ENCODE measurements at regions of chr9 and their contacts with region 1.

Region 1: DNA sequence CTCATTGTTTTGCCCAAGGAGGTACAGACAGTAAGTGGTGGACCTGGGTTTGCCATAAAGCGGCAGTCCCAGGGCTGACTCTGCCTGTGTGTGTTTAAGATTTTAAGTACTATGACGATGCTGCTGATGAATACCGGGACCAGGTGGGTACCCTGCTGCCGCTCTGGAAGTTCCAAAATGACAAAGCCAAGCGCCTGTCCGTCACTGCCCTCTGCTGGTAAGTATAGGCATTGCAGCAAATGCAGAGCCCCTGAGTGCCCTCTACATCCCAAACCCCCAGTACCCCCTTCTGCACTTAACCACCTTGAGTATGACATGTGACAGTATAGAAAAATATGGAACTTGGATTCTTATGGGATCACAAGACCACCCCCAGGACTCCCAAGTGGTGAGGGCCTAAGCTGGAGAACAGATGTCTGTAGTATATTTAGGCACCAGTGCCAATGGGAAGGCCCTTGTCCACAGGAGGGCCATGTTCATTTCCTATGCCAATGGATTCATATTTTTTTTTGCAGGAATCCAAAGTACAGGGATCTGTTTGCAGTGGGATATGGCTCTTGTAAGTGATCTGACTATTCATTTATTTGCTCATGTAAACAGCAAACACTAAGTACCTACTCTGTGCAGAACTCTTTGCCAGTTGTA is 22.0 kb downstream of the ENHO start:
- DNase-seq: no peak
- H3K4me3 ChIP-seq: no peak overlapping the region
- CTCF ChIP-seq: peak; percentile 90

Region 2: DNA sequence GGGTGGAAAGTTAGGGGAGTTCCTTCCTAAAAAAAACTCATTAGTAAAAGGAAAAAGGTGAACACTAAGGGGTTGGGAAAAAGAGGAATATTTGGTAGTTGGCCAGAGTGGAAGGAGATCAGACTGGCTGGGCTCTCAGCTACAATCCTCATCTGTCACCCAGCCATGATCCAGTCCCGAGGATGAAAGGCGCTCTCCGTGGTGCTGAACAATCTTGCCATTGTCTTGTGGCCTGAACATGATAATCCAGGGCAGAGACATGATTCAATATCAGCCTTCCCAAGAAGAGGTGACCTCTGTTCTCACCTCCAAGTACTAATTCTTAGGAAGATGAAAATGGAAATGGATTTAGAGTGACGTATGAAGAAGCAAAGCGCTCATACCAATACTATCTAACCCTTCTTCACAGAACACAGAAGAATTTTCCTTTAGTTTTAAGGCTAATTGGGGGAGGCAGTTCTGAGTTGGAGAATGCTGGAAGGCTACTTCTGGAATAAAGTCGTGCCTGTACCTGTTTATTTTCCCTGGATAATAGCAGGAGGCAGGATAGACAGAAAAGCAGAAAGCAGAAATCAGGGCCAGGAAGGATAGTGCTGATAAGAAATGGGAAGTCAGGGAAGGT is 87.4 kb before region 1 on chr9:
- CTCF ChIA-PET with region 1: interaction called, 11 read pairs
- POLR2A ChIA-PET with region 1: no interaction called
- DNase-seq: no peak
- H3K4me3 ChIP-seq: no peak overlapping the region
- CTCF ChIP-seq: no peak

Region 3: GRCh38 chr9:34446468-34446891 is 54.3 kb before region 1 on chr9:
- CTCF ChIA-PET with region 1: interaction called, 52 read pairs
- POLR2A ChIA-PET with region 1: no interaction called
- DNase-seq: no peak
- H3K4me3 ChIP-seq: no peak overlapping the region
- CTCF ChIP-seq: no peak

Region 4: DNA sequence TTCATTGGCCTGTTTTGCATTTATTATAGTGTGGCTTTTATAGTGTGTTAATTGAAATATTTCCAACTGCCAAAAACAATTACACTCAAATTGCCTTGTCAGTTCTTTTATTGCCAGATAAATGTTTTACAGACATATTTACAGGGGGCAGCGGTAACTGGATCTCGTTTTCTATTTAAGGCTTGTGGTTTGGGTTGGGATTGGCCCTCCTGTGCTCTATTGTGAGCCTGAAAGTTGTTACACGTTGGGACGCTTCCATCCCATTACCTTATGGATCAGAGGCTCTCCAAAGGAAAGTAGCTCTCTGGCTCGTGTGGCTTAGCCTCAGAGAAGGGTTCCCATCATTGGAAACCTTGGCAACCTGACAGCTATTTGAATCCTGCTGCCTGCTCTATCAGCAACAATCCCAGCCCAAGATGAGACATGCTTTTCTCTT is 21.3 kb before region 1 on chr9:
- CTCF ChIA-PET with region 1: interaction called, 26 read pairs
- POLR2A ChIA-PET with region 1: no interaction called
- DNase-seq: no peak
- H3K4me3 ChIP-seq: no peak overlapping the region
- CTCF ChIP-seq: no peak

Region 5: GRCh38 chr9:34591248-34591916 is 90.6 kb after region 1 on chr9:
- CTCF ChIA-PET with region 1: interaction called, 47 read pairs
- POLR2A ChIA-PET with region 1: no interaction called
- DNase-seq: no peak
- H3K4me3 ChIP-seq: no peak overlapping the region; the same call in 1 of the 2 replicates
- CTCF ChIP-seq: peak; percentile 99

Measured in AG04449 (cell line).